ENCODE measurements at regions of chr22 and their contacts with region 1.

Region 1: DNA sequence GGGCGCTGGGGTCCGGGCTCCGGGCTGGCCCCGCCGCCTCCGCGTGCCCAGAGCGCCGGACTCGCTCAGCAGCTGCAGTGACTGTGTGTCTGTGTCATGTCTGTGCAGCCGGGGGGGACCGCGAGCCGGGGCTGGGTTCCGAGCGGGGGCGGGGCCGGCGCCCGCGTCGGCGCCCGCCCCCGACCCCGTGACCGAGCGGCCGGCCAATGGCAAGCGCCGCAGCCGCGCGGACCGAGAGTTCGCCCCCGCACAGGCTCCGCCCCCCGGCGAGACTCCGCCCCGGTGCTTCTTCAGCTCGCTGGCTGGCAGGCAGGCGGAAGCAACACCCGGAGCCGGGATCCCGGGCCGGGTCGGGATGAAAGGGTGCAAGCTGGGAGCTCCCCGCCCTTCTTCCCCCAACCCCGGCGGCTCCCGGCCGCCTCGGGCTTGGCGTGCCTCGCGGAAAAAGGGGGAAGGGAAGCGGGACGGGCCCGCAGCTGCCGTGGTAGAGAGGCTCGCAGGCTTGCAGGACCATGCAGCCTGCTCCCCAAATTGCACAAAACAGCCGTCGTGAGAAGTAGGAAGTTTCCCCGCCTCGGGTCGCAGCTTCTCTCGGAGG is 750 bp upstream of the LARGE1 start:
- DNase-seq: peak; percentile 95 to 100 (median 99)
- H3K4me3 ChIP-seq: peak overlapping the region; percentile 34 to 97 (median 74)
- H3K27ac ChIP-seq: peak overlapping the region in 58 of 59 donors; percentile 38 to 92 (median 80)
- H3K27me3 ChIP-seq: no peaks in the 10 kb centered on the region
- CTCF ChIP-seq: peak in 22 of 56 donors; percentile 4 to 44 (median 22)

Region 2: GRCh38 chr22:33519071-33519973 is 401.7 kb before region 1 on chr22:
- intact Hi-C with region 1: loop called (anchors 2 to 5 kb)
- DNase-seq: peak in 3 of 10 donors; percentile 25 to 45 (median 33)
- H3K4me3 ChIP-seq: peak overlapping the region in 11 of 59 donors; percentile 3 to 41 (median 25)
- H3K27ac ChIP-seq: peak overlapping the region in 15 of 59 donors; percentile 6 to 76 (median 29)
- H3K27me3 ChIP-seq: no peaks in the 10 kb centered on the region
- CTCF ChIP-seq: peak; percentile 54 to 94 (median 75)

Region 3: GRCh38 chr22:33853200-33854097 is 67.6 kb before region 1 on chr22:
- intact Hi-C with region 1: loop called in 1 of 2 experiments (anchors 5 kb)
- DNase-seq: peak; percentile 17 to 70 (median 62)
- H3K4me3 ChIP-seq: peak overlapping the region; percentile 39 to 77 (median 59)
- H3K27ac ChIP-seq: peak overlapping the region in 48 of 59 donors; percentile 0 to 84 (median 50)
- H3K27me3 ChIP-seq: no peaks in the 10 kb centered on the region
- CTCF ChIP-seq: peak in 2 of 56 donors; percentile 8 to 19

Region 4: GRCh38 chr22:33952776-33953175 is 31.8 kb after region 1 on chr22:
- intact Hi-C with region 1: no loop called
- DNase-seq: no peak
- H3K4me3 ChIP-seq: peak overlapping the region in 7 of 59 donors; percentile 1 to 18 (median 12)
- H3K27ac ChIP-seq: no peak overlapping the region
- H3K27me3 ChIP-seq: peaks cover 0 to 16% (median 0%) of the 10 kb centered on the region in 45 donors
- CTCF ChIP-seq: no peak

Region 5: DNA sequence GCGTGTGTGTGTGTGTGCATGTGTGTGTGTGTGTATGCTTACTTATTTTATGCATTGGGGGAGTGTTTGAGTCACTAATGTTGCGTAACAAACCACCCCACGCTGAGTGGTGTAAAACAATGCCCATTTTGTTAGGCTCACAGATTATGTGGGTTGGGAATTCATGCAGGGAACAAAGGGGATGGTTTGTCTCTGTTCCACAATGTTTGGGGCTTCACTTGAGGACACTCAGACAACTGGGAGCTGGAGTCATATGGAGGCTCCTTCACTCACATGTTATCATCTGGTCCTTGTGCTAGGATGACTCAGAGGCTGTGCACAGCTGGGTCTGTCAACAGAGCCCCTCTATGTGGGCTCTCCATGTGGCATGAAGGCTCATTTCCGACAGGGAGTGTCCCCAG is 50.5 kb after region 1 on chr22:
- intact Hi-C with region 1: loop called in 1 of 2 experiments (anchors 5 kb)
- DNase-seq: peak in 7 of 10 donors; percentile 4 to 78 (median 46)
- H3K4me3 ChIP-seq: peak overlapping the region in 2 of 59 donors; percentile 0 to 8
- H3K27ac ChIP-seq: peak overlapping the region in 17 of 59 donors; percentile 16 to 74 (median 48)
- H3K27me3 ChIP-seq: peaks cover 0 to 5% (median 0%) of the 10 kb centered on the region in 45 donors
- CTCF ChIP-seq: no peak

Region 6: GRCh38 chr22:34045311-34045710 is 124.3 kb after region 1 on chr22:
- intact Hi-C with region 1: no loop called
- DNase-seq: no peak
- H3K4me3 ChIP-seq: no peak overlapping the region
- H3K27ac ChIP-seq: no peak overlapping the region
- H3K27me3 ChIP-seq: peaks cover 0 to 20% (median 0%) of the 10 kb centered on the region in 45 donors
- CTCF ChIP-seq: no peak

Region 7: DNA sequence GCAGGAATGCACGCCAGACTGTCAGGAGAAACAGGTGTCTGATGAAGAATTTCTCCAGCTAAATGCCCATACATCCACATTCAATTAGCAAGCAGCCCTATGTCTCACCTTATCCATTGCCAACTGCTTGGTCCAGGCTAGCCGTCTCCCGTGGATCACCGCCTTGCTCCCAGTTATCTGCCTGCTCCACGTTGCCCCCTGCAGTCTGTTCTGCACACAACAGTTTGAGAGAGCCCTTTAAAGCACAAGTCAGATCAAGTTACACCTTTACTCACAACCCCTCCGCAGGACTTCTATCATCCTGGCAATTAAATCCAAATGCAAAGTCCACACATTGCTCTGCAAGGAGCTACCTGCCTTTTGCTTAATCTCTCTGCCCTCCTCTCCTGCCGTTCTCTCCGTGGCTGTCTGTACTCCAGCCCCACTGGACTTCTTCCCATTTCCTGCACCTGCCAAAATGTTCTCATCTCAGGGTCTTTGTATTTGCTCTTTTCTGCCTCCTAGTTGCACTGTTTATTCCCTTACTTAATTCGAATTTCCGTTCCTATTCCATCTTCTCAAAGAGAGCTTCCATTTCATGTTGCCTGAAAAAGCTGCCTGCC is 184.5 kb after region 1 on chr22:
- intact Hi-C with region 1: loop called (anchors 2 to 5 kb)
- DNase-seq: peak; percentile 28 to 75 (median 59)
- H3K4me3 ChIP-seq: no peak overlapping the region
- H3K27ac ChIP-seq: no peak overlapping the region
- H3K27me3 ChIP-seq: peaks cover 0 to 19% (median 0%) of the 10 kb centered on the region in 45 donors
- CTCF ChIP-seq: peak; percentile 36 to 80 (median 70)

Region 8: GRCh38 chr22:34281738-34282137 is 360.7 kb after region 1 on chr22:
- intact Hi-C with region 1: no loop called
- DNase-seq: no peak
- H3K4me3 ChIP-seq: no peak overlapping the region
- H3K27ac ChIP-seq: no peak overlapping the region
- H3K27me3 ChIP-seq: peaks cover 0 to 10% (median 0%) of the 10 kb centered on the region in 45 donors
- CTCF ChIP-seq: no peak

Region 9: GRCh38 chr22:35023692-35024363 is 1102.8 kb after region 1 on chr22:
- intact Hi-C with region 1: loop called (anchors 5 to 10 kb)
- DNase-seq: peak; percentile 46 to 82 (median 74)
- H3K4me3 ChIP-seq: peak overlapping the region in 18 of 59 donors; percentile 1 to 34 (median 20)
- H3K27ac ChIP-seq: no peak overlapping the region
- H3K27me3 ChIP-seq: peaks cover 0 to 26% (median 0%) of the 10 kb centered on the region in 45 donors
- CTCF ChIP-seq: peak; percentile 70 to 96 (median 88)

Region 10: GRCh38 chr22:35150183-35151107 is 1229.4 kb after region 1 on chr22:
- intact Hi-C with region 1: loop called in 1 of 2 experiments (anchors 10 kb)
- DNase-seq: peak in 9 of 10 donors; percentile 45 to 79 (median 63)
- H3K4me3 ChIP-seq: peak overlapping the region in 1 of 59 donors; percentile 5
- H3K27ac ChIP-seq: no peak overlapping the region
- H3K27me3 ChIP-seq: peaks cover 0 to 28% (median 0%) of the 10 kb centered on the region in 45 donors
- CTCF ChIP-seq: peak; percentile 40 to 83 (median 72)